Activated naive CD4-positive, alpha-beta T cell treated with anti-CD3 and anti-CD28 coated beads for 36 hours (primary cell): ENCODE measurements at regions of chr16 and their contacts with region 1.

Region 1: GRCh38 chr16:48632137-48632774 is 22.3 kb upstream of the N4BP1 start:
- DNase-seq: no peak
- H3K4me3 Mint-ChIP-seq: no peak overlapping the region
- H3K27ac Mint-ChIP-seq: no peak overlapping the region
- H3K4me1 Mint-ChIP-seq: peaks cover 11% of the 10 kb centered on the region
- H3K27me3 Mint-ChIP-seq: peaks cover 3% of the 10 kb centered on the region

Region 2: GRCh38 chr16:47460711-47461597 is 1171.3 kb before region 1 on chr16 and contains the starts of genes ITFG1 and PHKB:
- CTCF ChIA-PET with region 1: no interaction called
- intact Hi-C with region 1: loop called (anchors 5 kb)
- DNase-seq: peak; percentile 93
- H3K4me3 Mint-ChIP-seq: peak within 1 kb of the TSS; percentile 92
- H3K27ac Mint-ChIP-seq: peak within 1 kb of the TSS; percentile 88
- H3K4me1 Mint-ChIP-seq: peaks cover 58% of the 10 kb centered on the region
- H3K27me3 Mint-ChIP-seq: no peaks in the 10 kb centered on the region
- total RNA-seq, gene ITFG1: 17.6 to 18.3 TPM
- total RNA-seq, gene PHKB: 22.5 to 25.3 TPM

Region 3: GRCh38 chr16:48123104-48123788 is 509.0 kb before region 1 on chr16:
- CTCF ChIA-PET with region 1: no interaction called
- intact Hi-C with region 1: loop called (anchors 1 kb)
- DNase-seq: peak; percentile 74
- H3K4me3 Mint-ChIP-seq: no peak overlapping the region
- H3K27ac Mint-ChIP-seq: no peak overlapping the region
- H3K4me1 Mint-ChIP-seq: peaks cover 15% of the 10 kb centered on the region
- H3K27me3 Mint-ChIP-seq: peaks cover 13% of the 10 kb centered on the region

Region 4: DNA sequence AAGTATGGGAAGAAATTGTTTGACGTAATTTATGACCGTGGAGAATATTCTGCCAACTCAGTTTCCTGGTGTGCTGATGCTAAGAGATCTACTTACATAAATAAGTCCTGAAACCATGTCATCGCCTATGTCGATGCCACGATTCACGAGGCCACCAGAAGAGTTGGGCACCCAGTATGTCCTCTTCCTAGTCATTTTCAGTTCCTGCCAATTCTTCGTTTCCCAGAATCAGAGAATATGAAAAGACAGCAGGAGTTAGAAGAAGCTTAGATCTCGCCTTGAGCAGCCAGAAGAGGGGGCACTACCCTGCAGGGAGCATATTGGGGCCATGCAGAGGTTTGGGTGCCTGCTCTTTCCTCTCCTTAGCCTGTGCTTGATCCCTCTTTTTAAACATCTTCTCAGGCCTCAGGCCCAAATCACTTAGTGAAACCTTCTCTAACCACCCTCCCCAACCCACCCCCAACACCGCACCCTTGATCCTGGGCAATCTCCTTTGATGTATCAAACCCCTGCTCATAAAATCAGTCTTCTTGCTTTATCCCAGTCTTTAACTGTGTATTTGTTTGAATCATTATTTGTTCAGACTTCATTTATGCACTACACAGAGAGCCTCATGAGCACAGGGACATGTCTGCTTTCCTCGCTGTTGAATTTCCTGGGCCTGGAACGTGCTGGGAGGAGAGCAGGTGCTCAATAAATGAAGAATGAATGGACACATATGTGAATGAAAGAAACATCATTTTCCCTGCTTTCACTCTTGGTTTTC is 400.3 kb before region 1 on chr16:
- CTCF ChIA-PET with region 1: interaction called, 8 read pairs
- intact Hi-C with region 1: loop called (anchors 1 kb)
- DNase-seq: peak; percentile 73
- H3K4me3 Mint-ChIP-seq: no peak overlapping the region
- H3K27ac Mint-ChIP-seq: peak overlapping the region; percentile 50
- H3K4me1 Mint-ChIP-seq: peaks cover 21% of the 10 kb centered on the region
- H3K27me3 Mint-ChIP-seq: peaks cover 2% of the 10 kb centered on the region

Region 5: DNA sequence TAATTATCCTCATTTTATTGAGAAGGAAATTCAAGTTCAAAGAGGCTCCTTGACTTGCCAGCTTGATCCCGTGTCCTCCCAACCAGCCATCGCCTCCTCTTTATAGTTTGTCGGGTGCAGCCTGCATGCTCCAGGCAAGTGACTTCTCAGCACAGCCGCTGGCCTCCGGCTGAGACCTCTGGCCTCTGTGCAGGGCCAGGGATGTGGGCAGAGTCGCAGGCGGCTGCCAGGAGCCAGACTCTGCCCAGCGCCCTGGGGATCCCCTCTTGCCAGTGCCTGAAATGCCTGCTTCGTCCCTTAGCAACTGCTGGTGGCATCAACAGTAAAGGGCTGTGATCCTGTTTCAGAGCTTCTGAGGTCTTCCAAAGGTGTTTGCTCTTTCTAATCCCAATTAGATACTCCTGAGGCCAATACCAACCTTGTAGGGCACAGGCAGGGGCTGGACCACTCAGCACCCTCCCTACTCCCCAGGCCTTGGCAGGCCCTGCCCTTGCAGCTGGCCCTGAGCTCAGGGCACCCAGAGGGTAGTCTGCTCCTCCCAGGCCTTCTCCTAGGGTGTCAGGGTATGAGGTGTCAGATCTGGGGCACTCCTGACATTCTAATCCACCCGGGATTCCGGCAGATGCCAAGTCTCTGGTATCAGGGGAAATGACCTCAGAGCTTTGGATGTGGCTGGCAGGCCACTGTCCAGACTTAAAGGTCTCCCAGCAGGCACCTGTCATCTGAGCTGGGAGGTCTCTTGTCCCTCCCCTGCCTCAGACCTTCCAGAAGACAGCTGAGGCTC is 179.1 kb before region 1 on chr16:
- CTCF ChIA-PET with region 1: interaction called, 3 read pairs
- intact Hi-C with region 1: loop called (anchors 1 kb)
- DNase-seq: no peak
- H3K4me3 Mint-ChIP-seq: no peak overlapping the region
- H3K27ac Mint-ChIP-seq: no peak overlapping the region
- H3K4me1 Mint-ChIP-seq: peaks cover 12% of the 10 kb centered on the region
- H3K27me3 Mint-ChIP-seq: peaks cover 8% of the 10 kb centered on the region